K562 (cell line): ENCODE measurements at regions of chr11 and their contacts with region 1.

Region 1: GRCh38 chr11:2885676-2886081 is at the start of gene CDKN1C:
- DNase-seq: peak; percentile 93 to 97 (median 94)
- ATAC-seq: peak; percentile 82
- H3K4me3 ChIP-seq: peak within 1 kb of the TSS; percentile 59
- H3K27ac ChIP-seq: peak within 1 kb of the TSS; percentile 49; the same call in 2 of the 3 replicates
- H3K4me1 ChIP-seq: peaks cover 21 to 81% of the 10 kb centered on the region in 2 experiments
- H3K27me3 ChIP-seq: 0 out of 5 replicates have a peak, but pooled peaks cover 0 to 5% of the 10 kb centered on the region in 2 experiments
- CTCF ChIP-seq: no peak
- EP300 ChIP-seq: no peak
- POLR2A ChIP-seq: peak; percentile 84
- RAD21 ChIP-seq: no peak
- polyA plus RNA-seq, gene CDKN1C: 9.3 to 18.7 TPM

Region 2: DNA sequence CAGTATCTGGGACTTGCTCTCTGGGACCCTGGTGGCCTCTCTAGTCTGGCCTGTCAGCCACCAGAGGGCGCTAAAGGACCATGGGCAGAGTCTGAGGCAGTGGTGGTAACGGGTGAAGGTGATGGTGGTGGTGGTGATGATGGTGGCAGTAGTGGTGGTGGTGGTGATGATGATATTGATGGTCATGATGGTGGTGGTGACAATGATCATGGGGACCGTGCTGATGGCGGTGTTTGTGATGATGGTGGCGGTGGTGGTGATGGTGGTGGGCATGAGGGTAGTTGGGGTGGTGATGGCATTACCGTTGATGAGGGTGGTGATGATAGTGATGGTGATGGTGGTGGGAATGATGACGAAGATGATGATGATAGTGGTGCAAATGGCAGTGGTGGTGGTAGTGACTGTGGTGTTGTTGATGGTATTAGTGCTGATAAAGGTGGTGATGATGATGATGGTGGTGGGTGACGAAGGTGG is 457.3 kb before region 1 on chr11:
- CTCF ChIA-PET with region 1: no interaction called
- POLR2A ChIA-PET with region 1: no interaction called
- in situ Hi-C with region 1: no loop called
- intact Hi-C with region 1: loop called (anchors 2 kb)
- DNase-seq: peak; percentile 67 to 76 (median 74)
- ATAC-seq: peak; percentile 96
- H3K4me3 ChIP-seq: no peak overlapping the region
- H3K27ac ChIP-seq: no peak overlapping the region
- H3K4me1 ChIP-seq: peaks cover 0 to 14% of the 10 kb centered on the region in 2 experiments; a peak in 2 of 5 replicates
- H3K27me3 ChIP-seq: peaks cover 0 to 43% of the 10 kb centered on the region in 2 experiments; a peak in 4 of 5 replicates
- CTCF ChIP-seq: peak; percentile 90 to 94 (median 91)
- EP300 ChIP-seq: no peak
- POLR2A ChIP-seq: no peak
- RAD21 ChIP-seq: peak; percentile 98 to 99

Region 3: DNA sequence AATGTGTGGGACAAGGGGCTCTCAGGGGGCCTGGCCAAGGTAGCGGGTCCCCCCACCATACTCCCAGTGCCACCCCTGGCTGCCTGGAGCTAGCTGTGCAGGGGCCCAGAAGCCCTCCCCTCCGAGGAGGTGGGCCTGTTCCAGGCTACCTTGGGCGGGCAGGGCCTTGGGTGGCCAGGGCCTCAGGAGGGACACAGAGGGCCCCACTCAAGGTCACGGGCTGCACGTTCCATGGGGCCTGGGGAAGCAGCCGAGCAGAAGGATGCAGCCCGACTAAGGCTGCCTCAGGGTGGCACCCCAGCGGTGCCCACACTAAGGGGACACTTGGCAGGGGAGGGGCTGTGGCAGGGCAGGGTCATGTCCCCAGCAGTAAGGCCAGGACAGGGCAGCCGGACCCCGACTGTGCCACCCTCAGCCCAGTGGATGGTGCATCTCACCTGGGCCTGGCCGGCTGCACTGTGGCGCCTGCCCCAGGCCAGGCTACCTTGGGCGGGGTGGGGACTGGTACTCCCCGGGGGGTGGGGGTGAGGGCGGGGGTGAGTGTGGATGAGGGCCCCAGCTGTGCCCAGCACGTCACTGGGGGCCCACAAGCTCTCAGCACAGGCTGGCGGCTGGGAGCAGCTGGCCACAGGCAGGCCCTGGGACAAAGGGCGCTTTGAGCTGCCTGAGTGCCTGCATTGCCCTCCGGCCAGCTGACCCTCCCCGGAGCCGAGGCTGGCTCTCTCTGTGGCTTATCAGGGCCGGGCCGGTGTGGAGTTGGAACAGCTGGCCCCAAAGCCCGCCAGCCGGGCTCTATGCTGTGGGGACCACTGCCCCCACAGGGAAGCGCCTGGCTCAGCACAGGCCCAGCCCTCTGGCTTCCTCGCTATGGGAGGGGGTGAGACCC is 323.7 kb before region 1 on chr11:
- CTCF ChIA-PET with region 1: interaction called, 4 read pairs
- POLR2A ChIA-PET with region 1: interaction called, 5 read pairs
- in situ Hi-C with region 1: no loop called
- intact Hi-C with region 1: loop called (anchors 10 kb)
- DNase-seq: no peak
- ATAC-seq: peak; percentile 16; the same call in 1 of the 3 replicates
- H3K4me3 ChIP-seq: no peak overlapping the region
- H3K27ac ChIP-seq: no peak overlapping the region
- H3K4me1 ChIP-seq: peaks cover 0 to 41% of the 10 kb centered on the region in 2 experiments; a peak in 2 of 5 replicates
- H3K27me3 ChIP-seq: peaks cover 12 to 38% of the 10 kb centered on the region in 2 experiments
- CTCF ChIP-seq: no peak
- EP300 ChIP-seq: no peak
- POLR2A ChIP-seq: no peak
- RAD21 ChIP-seq: no peak

Region 4: GRCh38 chr11:2699531-2700414 is 185.9 kb before region 1 on chr11 and contains the start of gene KCNQ1OT1:
- CTCF ChIA-PET with region 1: no interaction called
- POLR2A ChIA-PET with region 1: interaction called, 10 read pairs
- in situ Hi-C with region 1: no loop called
- intact Hi-C with region 1: loop called (anchors 5 kb)
- DNase-seq: peak; percentile 93 to 99 (median 94)
- ATAC-seq: peak; percentile 94
- H3K4me3 ChIP-seq: peak within 1 kb of the TSS; percentile 69
- H3K27ac ChIP-seq: peak within 1 kb of the TSS; percentile 92
- H3K4me1 ChIP-seq: peaks cover 20 to 47% of the 10 kb centered on the region in 2 experiments; a peak in 4 of 5 replicates
- H3K27me3 ChIP-seq: no peaks in the 10 kb centered on the region
- CTCF ChIP-seq: 0 out of 6 replicates have a peak, but pooled peaks of 1 of the 3 experiments have one; percentile 2
- EP300 ChIP-seq: 0 out of 2 replicates have a peak, but pooled peaks have one; percentile 9
- POLR2A ChIP-seq: peak; percentile 97
- RAD21 ChIP-seq: peak in 1 of 2 experiments; percentile 18; a peak in 1 of 4 replicates
- polyA plus RNA-seq, gene KCNQ1OT1: 0.04 to 0.17 TPM

Region 5: GRCh38 chr11:2853997-2854560 is 31.6 kb before region 1 on chr11:
- CTCF ChIA-PET with region 1: no interaction called
- POLR2A ChIA-PET with region 1: no interaction called
- in situ Hi-C with region 1: no loop called
- intact Hi-C with region 1: no loop called
- DNase-seq: no peak
- ATAC-seq: no peak
- H3K4me3 ChIP-seq: no peak overlapping the region
- H3K27ac ChIP-seq: no peak overlapping the region
- H3K4me1 ChIP-seq: peaks cover 0 to 46% of the 10 kb centered on the region in 2 experiments; a peak in 2 of 5 replicates
- H3K27me3 ChIP-seq: peaks cover 0 to 33% of the 10 kb centered on the region in 2 experiments; a peak in 3 of 5 replicates
- CTCF ChIP-seq: no peak
- EP300 ChIP-seq: no peak
- POLR2A ChIP-seq: no peak
- RAD21 ChIP-seq: no peak

Region 6: DNA sequence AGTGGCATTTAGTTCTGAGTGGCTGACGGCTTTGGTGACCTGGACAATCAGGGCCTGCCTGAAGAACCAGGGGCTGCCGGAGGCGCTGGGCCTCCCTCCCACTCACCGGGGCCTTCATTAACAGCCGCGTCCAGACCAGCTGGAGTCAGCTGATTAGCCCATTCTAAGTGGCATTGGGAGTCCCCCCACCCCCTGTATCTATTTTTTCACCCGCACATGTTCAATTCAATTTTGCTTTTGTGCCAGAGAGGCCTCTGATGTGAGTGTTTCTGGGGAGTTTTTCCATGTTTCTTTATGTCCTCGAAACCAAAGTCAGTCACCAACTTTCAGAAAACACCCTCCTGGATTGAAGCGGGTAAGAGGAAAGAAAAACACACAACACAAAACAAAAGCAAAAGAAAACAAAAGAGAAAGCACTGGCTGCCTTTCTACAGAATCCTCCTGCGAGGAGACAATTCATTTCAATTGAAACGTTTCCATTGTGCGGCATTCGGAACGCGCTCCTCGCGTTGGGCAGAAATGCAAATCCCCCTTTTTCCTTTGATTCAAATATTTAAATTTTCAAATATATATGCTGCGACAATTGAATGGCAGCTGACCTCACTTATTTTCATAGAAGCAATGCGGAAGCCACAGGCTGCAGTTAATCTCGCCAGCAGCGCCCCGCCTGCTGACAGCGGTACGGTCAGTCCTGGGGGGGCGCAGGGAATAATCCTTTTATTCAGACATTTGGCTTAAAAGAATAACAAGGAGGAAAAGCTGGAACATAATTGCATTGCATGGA is 17.8 kb before region 1 on chr11:
- CTCF ChIA-PET with region 1: no interaction called
- POLR2A ChIA-PET with region 1: interaction called, 5 read pairs
- in situ Hi-C with region 1: no loop called
- intact Hi-C with region 1: loop called (anchors 2 kb)
- DNase-seq: peak; percentile 79 to 89 (median 86)
- ATAC-seq: peak; percentile 84
- H3K4me3 ChIP-seq: no peak overlapping the region
- H3K27ac ChIP-seq: peak overlapping the region; percentile 66
- H3K4me1 ChIP-seq: peaks cover 10 to 50% of the 10 kb centered on the region in 2 experiments; a peak in 4 of 5 replicates
- H3K27me3 ChIP-seq: no peaks in the 10 kb centered on the region
- CTCF ChIP-seq: peak in 2 of 3 experiments; percentile 22 to 31; a peak in 3 of 6 replicates
- EP300 ChIP-seq: peak; percentile 56; the same call in 1 of the 2 replicates
- POLR2A ChIP-seq: no peak
- RAD21 ChIP-seq: no peak

Region 7: GRCh38 chr11:2945031-2945756 is 59.5 kb after region 1 on chr11:
- CTCF ChIA-PET with region 1: no interaction called
- POLR2A ChIA-PET with region 1: no interaction called
- in situ Hi-C with region 1: no loop called
- intact Hi-C with region 1: no loop called
- DNase-seq: no peak
- ATAC-seq: no peak
- H3K4me3 ChIP-seq: no peak overlapping the region
- H3K27ac ChIP-seq: no peak overlapping the region
- H3K4me1 ChIP-seq: peaks cover 0 to 32% of the 10 kb centered on the region in 2 experiments; a peak in 2 of 5 replicates
- H3K27me3 ChIP-seq: no peaks in the 10 kb centered on the region
- CTCF ChIP-seq: no peak
- EP300 ChIP-seq: no peak
- POLR2A ChIP-seq: no peak
- RAD21 ChIP-seq: no peak

Region 8: DNA sequence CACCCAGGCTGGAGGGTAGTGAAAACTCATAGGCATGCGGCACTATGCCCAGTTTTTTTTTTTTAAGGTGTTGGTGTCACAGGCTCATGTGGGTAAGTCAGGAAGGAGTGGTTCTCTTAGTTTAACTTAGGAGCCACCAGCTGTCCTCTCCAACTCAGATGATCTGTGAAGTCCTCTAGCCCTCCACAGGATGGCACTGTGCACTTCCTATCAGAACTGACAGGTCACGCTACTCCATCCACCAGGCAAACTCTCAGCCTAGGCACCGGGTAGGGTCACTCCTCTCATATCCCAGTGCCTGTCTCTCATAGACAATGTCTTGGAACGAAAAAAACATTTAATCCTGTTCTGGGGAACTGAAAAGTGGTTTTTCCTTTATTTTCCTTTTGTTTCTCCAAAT is 89.9 kb after region 1 on chr11:
- CTCF ChIA-PET with region 1: no interaction called
- POLR2A ChIA-PET with region 1: no interaction called
- in situ Hi-C with region 1: no loop called
- intact Hi-C with region 1: no loop called
- DNase-seq: peak; percentile 37 to 61 (median 44)
- ATAC-seq: peak; percentile 96
- H3K4me3 ChIP-seq: no peak overlapping the region
- H3K27ac ChIP-seq: no peak overlapping the region
- H3K4me1 ChIP-seq: no peaks in the 10 kb centered on the region
- H3K27me3 ChIP-seq: no peaks in the 10 kb centered on the region
- CTCF ChIP-seq: peak; percentile 57 to 60 (median 58)
- EP300 ChIP-seq: no peak
- POLR2A ChIP-seq: no peak
- RAD21 ChIP-seq: peak; percentile 34 to 42

Region 9: GRCh38 chr11:3021125-3021524 is 135.4 kb after region 1 on chr11:
- CTCF ChIA-PET with region 1: no interaction called
- POLR2A ChIA-PET with region 1: no interaction called
- in situ Hi-C with region 1: no loop called
- intact Hi-C with region 1: no loop called
- DNase-seq: peak; percentile 45 to 70 (median 59)
- ATAC-seq: peak; percentile 86
- H3K4me3 ChIP-seq: no peak overlapping the region
- H3K27ac ChIP-seq: no peak overlapping the region
- H3K4me1 ChIP-seq: peaks cover 0 to 3% of the 10 kb centered on the region in 2 experiments; a peak in 1 of 5 replicates
- H3K27me3 ChIP-seq: no peaks in the 10 kb centered on the region
- CTCF ChIP-seq: peak; percentile 51 to 58 (median 53)
- EP300 ChIP-seq: no peak
- POLR2A ChIP-seq: no peak
- RAD21 ChIP-seq: peak in 1 of 2 experiments; percentile 30; a peak in 2 of 4 replicates